PC-9 (cell line): ENCODE measurements at regions of chr10 and their contacts with region 1.

Region 1: GRCh38 chr10:11684717-11685645 is 57.2 kb upstream of the ECHDC3 start:
- DNase-seq: peak; percentile 73 to 94
- H3K4me3 ChIP-seq: peak overlapping the region; percentile 53; the same call in 1 of the 2 replicates
- H3K27ac ChIP-seq: peak overlapping the region; percentile 98
- H3K4me1 ChIP-seq: peaks cover 61% of the 10 kb centered on the region
- H3K27me3 ChIP-seq: no peaks in the 10 kb centered on the region
- CTCF ChIP-seq: no peak

Region 2: GRCh38 chr10:11515596-11516430 is 169.2 kb before region 1 on chr10:
- CTCF ChIA-PET with region 1: no interaction called
- POLR2A ChIA-PET with region 1: no interaction called
- intact Hi-C with region 1: loop called (anchors 2 kb)
- DNase-seq: peak in 1 of 2 experiments; percentile 25
- H3K4me3 ChIP-seq: no peak overlapping the region
- H3K27ac ChIP-seq: 0 out of 2 replicates have a peak overlapping the region, but pooled peaks have one; percentile 17
- H3K4me1 ChIP-seq: no peaks in the 10 kb centered on the region
- H3K27me3 ChIP-seq: no peaks in the 10 kb centered on the region
- CTCF ChIP-seq: peak; percentile 82

Region 3: GRCh38 chr10:11586170-11586569 is 98.8 kb before region 1 on chr10:
- CTCF ChIA-PET with region 1: no interaction called
- POLR2A ChIA-PET with region 1: no interaction called
- intact Hi-C with region 1: loop called (anchors 5 kb)
- DNase-seq: no peak
- H3K4me3 ChIP-seq: no peak overlapping the region
- H3K27ac ChIP-seq: peak overlapping the region; percentile 9; the same call in 1 of the 2 replicates
- H3K4me1 ChIP-seq: peaks cover 29% of the 10 kb centered on the region
- H3K27me3 ChIP-seq: no peaks in the 10 kb centered on the region
- CTCF ChIP-seq: no peak

Region 4: DNA sequence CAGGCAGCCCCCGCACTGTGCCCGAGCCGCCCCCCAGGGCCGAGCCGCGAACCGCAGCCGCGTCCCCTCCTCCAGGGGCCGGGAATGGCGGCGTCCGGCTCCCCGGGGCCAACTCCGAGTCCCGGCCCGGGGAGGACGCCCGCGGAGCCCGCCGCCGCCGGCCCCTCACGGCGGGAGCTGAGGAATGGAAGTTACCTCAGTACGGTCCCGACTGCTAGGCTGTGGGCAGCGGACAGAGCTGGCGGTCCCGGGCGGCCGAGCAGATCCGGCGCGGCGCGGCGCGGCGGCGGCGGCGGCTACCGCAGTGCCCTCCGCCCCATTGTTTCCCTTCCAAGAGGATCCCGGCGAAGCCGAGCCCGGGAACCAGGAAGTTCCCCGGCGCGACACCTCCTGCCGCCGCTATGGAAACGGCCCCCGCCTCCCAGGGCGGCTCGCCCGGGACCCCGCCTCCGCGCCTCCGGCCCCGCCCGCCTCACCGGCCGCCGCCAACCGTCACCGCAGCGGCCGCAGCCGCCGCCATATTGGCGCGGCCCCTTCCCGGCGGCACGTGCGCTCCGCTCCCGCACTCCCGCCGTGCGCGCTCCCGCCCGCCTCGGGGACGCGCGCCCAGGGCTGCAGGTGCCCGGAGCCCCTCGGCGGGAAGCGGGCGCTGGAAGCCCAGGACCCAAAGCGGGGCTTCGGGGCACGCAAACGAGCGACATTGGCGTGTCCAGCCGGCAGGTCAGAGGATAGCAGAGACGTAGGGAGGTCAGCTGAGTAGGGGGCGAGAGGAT is 73.5 kb before region 1 on chr10 and contains the start of gene USP6NL:
- CTCF ChIA-PET with region 1: no interaction called
- POLR2A ChIA-PET with region 1: no interaction called
- intact Hi-C with region 1: loop called (anchors 1 kb)
- DNase-seq: peak; percentile 66 to 92
- H3K4me3 ChIP-seq: peak within 1 kb of the TSS; percentile 98
- H3K27ac ChIP-seq: peak within 1 kb of the TSS; percentile 76
- H3K4me1 ChIP-seq: peaks cover 29% of the 10 kb centered on the region
- H3K27me3 ChIP-seq: no peaks in the 10 kb centered on the region
- CTCF ChIP-seq: no peak
- total RNA-seq, gene USP6NL: 16.8 and 22.1 TPM in 2 replicates

Region 5: GRCh38 chr10:11719496-11720217 is 34.7 kb after region 1 on chr10:
- CTCF ChIA-PET with region 1: no interaction called
- POLR2A ChIA-PET with region 1: interaction called, 16 read pairs
- intact Hi-C with region 1: loop called (anchors 1 kb)
- DNase-seq: peak; percentile 91 to 96
- H3K4me3 ChIP-seq: no peak overlapping the region
- H3K27ac ChIP-seq: peak overlapping the region; percentile 64
- H3K4me1 ChIP-seq: peaks cover 34% of the 10 kb centered on the region
- H3K27me3 ChIP-seq: no peaks in the 10 kb centered on the region
- CTCF ChIP-seq: no peak

Region 6: DNA sequence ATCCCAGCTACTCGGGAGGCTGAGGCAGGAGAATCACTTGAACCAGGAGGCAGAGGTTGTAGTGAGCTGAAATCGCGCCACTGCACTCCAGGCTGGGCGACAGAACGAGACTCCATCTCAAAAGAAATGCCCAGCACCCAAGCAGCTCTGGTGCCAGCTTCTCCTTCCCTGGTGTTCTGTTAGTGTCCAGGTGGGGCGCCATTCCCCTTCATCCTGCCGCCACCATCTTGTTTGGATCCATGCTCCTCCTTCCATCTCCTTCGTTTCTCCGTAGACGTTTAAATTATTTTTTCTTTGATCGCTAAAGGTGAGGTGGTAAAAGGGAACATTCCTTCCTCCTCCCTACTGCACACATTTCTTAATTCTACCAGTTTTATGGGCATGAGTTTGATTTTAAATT is 168.5 kb after region 1 on chr10:
- CTCF ChIA-PET with region 1: no interaction called
- POLR2A ChIA-PET with region 1: no interaction called
- intact Hi-C with region 1: no loop called
- DNase-seq: no peak
- H3K4me3 ChIP-seq: no peak overlapping the region
- H3K27ac ChIP-seq: no peak overlapping the region
- H3K4me1 ChIP-seq: no peaks in the 10 kb centered on the region
- H3K27me3 ChIP-seq: no peaks in the 10 kb centered on the region
- CTCF ChIP-seq: 0 out of 2 replicates have a peak, but pooled peaks have one; percentile 27